AG04450 (cell line): ENCODE measurements at regions of chrX and their contacts with region 1.

Region 1: DNA sequence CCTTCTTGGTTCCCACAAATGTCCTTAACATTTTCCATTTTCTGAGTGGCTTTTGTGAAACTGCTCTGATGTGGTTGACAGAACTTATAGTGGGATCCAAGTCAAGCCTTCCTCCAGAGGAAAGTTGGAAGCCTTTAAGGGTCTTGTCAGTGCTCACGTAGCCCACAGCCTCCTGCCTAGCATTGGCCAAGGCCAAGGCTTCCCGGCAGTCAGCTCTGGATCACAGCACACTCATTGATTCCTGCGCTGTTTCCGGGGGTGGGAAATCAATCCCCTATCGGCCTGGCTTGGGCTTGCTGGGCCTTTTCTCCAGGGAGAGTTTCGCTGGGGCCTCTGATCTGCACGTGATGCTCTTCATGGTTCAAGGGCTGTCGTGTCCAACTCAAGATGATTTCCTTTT is 76.1 kb downstream of the SLC9A6 start:
- DNase-seq: no peak
- H3K4me3 ChIP-seq: no peak overlapping the region
- H3K27ac ChIP-seq: no peak overlapping the region
- H3K27me3 ChIP-seq: no peaks in the 10 kb centered on the region
- CTCF ChIP-seq: no peak

Region 2: DNA sequence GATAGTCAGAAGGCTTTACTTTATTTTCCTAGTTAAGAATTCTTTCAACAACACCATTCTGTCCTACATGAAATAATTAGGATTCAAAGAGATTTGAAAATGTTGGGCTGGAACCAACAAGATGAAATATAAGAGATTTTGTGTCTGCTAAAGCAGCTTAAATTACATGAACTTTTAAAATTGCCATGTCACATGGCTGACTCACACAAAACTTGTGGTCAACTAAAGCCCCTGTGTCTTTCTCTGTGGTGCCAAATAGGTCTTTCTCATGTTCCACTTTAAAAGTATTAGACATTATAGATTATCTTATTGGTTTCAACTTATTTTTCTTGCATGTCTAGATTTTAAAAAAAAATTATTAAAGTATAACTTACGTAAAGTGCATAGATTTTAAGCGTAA is 25.2 kb after region 1 on chrX:
- CTCF ChIA-PET with region 1: no interaction called
- POLR2A ChIA-PET with region 1: no interaction called
- DNase-seq: no peak
- H3K4me3 ChIP-seq: no peak overlapping the region
- H3K27ac ChIP-seq: no peak overlapping the region
- H3K27me3 ChIP-seq: peaks cover 2% of the 10 kb centered on the region
- CTCF ChIP-seq: no peak

Region 3: GRCh38 chrX:136130931-136131833 is 69.9 kb after region 1 on chrX:
- CTCF ChIA-PET with region 1: interaction called, 10 read pairs
- POLR2A ChIA-PET with region 1: no interaction called
- DNase-seq: peak; percentile 16
- H3K4me3 ChIP-seq: no peak overlapping the region
- H3K27ac ChIP-seq: peak overlapping the region; percentile 39
- H3K27me3 ChIP-seq: no peaks in the 10 kb centered on the region
- CTCF ChIP-seq: no peak